ENCODE measurements at regions of chr16 and their contacts with region 1.

Region 1: GRCh38 chr16:50024684-50025536 is at the start of gene CNEP1R1:
- DNase-seq: peak; percentile 87
- ATAC-seq: peak; percentile 95
- H3K4me3 Mint-ChIP-seq: peak within 1 kb of the TSS; percentile 96
- H3K27ac Mint-ChIP-seq: peak within 1 kb of the TSS; percentile 83
- H3K4me1 Mint-ChIP-seq: peaks cover 19% of the 10 kb centered on the region
- H3K27me3 Mint-ChIP-seq: peaks cover 6% of the 10 kb centered on the region
- CTCF ChIP-seq: peak; percentile 82
- total RNA-seq, gene CNEP1R1: 22.1 and 31.0 TPM in 2 replicates

Region 2: DNA sequence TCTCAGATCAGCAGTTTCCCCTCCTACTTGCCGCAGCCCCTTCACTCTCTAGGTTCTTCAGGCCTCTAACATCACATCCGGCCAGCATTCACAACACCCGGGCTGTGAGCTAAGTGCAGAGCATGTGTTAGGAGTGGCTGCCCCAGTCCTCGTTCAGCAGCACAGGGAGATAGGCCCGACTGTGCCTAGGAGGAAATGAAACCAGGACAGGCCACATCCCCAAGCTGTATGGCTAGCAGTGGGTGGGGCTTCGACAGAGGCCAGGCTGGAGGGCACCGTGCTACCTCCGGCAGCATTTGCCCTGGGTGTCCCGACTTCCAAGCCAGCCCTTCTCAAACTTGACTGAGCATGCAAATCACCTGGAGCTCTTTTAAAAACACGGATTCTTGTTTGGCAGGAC is 449.5 kb before region 1 on chr16:
- CTCF ChIA-PET with region 1: no interaction called
- POLR2A ChIA-PET with region 1: no interaction called
- intact Hi-C with region 1: no loop called
- DNase-seq: peak; percentile 19
- ATAC-seq: peak; percentile 99
- H3K4me3 Mint-ChIP-seq: peak overlapping the region; percentile 26
- H3K27ac Mint-ChIP-seq: peak overlapping the region; percentile 72
- H3K4me1 Mint-ChIP-seq: peaks cover 17% of the 10 kb centered on the region
- H3K27me3 Mint-ChIP-seq: no peaks in the 10 kb centered on the region
- CTCF ChIP-seq: no peak

Region 3: GRCh38 chr16:49855280-49855821 is 169.6 kb before region 1 on chr16:
- CTCF ChIA-PET with region 1: no interaction called
- POLR2A ChIA-PET with region 1: no interaction called
- intact Hi-C with region 1: loop called (anchors 5 kb)
- DNase-seq: peak; percentile 47
- ATAC-seq: peak; percentile 77
- H3K4me3 Mint-ChIP-seq: peak overlapping the region; percentile 69
- H3K27ac Mint-ChIP-seq: no peak overlapping the region
- H3K4me1 Mint-ChIP-seq: peaks cover 21% of the 10 kb centered on the region
- H3K27me3 Mint-ChIP-seq: peaks cover 38% of the 10 kb centered on the region
- CTCF ChIP-seq: no peak

Region 4: DNA sequence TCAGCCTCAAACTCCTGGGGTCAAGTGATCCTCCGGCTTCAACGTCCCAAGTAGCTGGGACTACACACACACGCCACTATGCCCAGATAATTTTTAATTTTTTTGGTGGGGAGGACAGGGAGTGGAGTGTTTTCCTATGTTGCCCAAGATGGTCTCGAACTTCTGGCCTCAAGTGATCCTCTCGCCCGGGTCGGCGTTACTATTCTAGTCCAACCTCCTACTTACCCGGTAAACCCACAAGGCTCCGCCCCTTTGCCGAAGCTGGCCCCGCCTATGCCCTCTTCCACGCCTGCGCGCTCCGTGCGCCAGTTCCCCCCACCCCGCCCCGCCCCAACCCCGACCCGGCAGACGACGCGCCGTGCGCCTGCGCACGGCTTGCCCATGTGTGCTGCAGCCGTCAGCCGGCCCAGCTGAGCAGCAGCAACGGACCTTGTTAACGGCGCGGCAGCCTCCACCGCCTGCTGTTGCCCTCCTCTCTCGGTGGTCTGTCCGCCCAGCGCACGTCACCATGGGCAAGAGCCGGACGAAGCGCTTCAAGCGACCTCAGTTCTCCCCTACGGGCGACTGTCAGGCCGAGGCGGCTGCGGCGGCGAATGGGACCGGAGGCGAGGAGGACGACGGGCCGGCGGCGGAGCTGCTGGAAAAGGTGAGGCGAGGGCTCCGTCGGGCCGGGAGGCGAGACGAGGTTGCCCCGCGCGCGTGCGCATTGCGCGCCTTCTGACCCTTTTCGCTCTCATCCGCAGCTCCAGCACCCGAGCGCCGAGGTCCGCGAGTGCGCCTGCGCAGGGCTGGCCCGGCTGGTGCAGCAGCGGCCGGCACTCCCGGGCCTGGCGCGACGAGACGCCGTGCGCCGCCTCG is 40.9 kb after region 1 on chr16 and contains the start of gene HEATR3:
- CTCF ChIA-PET with region 1: interaction called, 17 read pairs
- POLR2A ChIA-PET with region 1: interaction called, 15 read pairs
- intact Hi-C with region 1: loop called (anchors 1 kb)
- DNase-seq: peak; percentile 92
- ATAC-seq: peak; percentile 85
- H3K4me3 Mint-ChIP-seq: peak within 1 kb of the TSS; percentile 90
- H3K27ac Mint-ChIP-seq: peak within 1 kb of the TSS; percentile 90
- H3K4me1 Mint-ChIP-seq: peaks cover 31% of the 10 kb centered on the region
- H3K27me3 Mint-ChIP-seq: no peaks in the 10 kb centered on the region
- CTCF ChIP-seq: no peak
- total RNA-seq, gene HEATR3: 16.1 and 17.8 TPM in 2 replicates

Region 5: DNA sequence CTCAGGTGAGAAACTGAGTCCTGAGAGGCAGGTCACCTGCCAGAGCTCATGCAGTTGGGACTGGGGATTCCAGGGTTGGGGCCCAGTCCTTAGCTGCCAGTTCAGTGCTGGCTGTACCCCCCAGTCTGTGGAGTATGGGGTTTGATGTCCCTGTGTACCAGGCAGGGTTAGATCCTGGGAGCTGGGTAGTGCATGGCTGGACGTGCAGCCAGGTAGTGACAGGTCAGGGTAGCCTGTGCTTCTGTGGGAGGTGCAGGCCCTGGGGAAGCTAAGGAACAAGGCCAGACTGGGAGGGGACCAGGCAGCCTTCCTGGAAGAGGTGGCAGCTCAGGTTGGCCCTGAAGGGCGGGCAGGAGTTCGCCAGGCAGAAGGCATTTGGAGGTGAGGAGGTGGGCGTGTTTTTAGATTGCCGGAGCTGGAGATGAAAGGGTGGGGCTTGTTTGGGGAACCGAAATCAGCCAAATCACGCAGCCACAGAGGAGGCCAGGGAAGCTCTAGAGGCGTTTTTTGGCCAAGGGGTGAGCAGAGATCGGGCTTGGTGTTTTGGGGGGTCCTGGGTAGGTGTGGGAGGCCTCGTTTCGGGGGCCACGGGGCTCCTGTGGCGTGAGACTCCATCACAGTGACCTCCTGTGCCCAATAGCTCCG is 248.9 kb after region 1 on chr16:
- CTCF ChIA-PET with region 1: no interaction called
- POLR2A ChIA-PET with region 1: interaction called, 10 read pairs
- intact Hi-C with region 1: no loop called
- DNase-seq: no peak
- ATAC-seq: peak; percentile 82
- H3K4me3 Mint-ChIP-seq: peak overlapping the region; percentile 99
- H3K27ac Mint-ChIP-seq: peak overlapping the region; percentile 100
- H3K4me1 Mint-ChIP-seq: peaks cover 92% of the 10 kb centered on the region
- H3K27me3 Mint-ChIP-seq: no peaks in the 10 kb centered on the region
- CTCF ChIP-seq: no peak

Region 6: GRCh38 chr16:50665128-50665878 is 640.4 kb after region 1 on chr16:
- CTCF ChIA-PET with region 1: interaction called, 16 read pairs
- POLR2A ChIA-PET with region 1: interaction called, 3 read pairs
- intact Hi-C with region 1: loop called (anchors 2 kb)
- DNase-seq: peak; percentile 68
- ATAC-seq: peak; percentile 70
- H3K4me3 Mint-ChIP-seq: peak overlapping the region; percentile 81
- H3K27ac Mint-ChIP-seq: peak overlapping the region; percentile 65
- H3K4me1 Mint-ChIP-seq: peaks cover 23% of the 10 kb centered on the region
- H3K27me3 Mint-ChIP-seq: no peaks in the 10 kb centered on the region
- CTCF ChIP-seq: no peak

Region 7: DNA sequence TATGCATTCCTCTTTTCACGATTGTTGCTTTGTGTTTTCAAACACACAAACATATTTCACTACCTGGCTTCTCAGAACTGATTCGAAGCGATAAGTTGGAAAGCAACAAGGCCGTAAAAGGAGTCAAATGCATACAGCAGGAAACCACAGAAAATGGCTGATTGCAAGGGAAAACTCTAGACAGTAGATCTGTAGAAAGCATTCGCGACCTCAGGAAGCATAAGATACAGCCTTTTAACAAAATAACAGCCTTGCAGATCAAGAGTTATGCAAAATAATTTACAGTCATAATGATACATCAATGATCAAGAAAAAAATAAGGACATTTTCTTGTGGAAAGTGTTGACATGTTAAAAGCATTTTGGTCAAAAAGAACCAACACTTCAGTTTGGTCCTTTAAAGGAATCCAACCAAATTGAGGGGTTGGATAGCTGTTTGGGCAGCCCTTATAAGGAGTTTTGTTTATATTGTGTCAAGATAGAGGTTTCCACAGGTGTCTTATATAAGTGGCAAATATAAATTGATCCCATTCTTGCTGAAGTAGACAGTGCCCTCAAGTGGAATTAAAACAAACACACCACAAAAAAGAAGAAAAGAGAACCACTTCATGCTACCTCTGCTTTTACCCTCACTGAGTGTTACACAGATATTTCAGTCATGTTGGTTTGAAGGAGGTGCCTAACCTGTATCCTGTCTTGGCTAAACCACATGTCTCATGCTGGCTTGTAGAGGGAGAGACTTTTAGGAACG is 722.5 kb after region 1 on chr16:
- CTCF ChIA-PET with region 1: interaction called, 3 read pairs
- POLR2A ChIA-PET with region 1: interaction called, 6 read pairs
- intact Hi-C with region 1: loop called (anchors 1 kb)
- DNase-seq: no peak
- ATAC-seq: peak; percentile 61
- H3K4me3 Mint-ChIP-seq: peak overlapping the region; percentile 45
- H3K27ac Mint-ChIP-seq: peak overlapping the region; percentile 11
- H3K4me1 Mint-ChIP-seq: peaks cover 53% of the 10 kb centered on the region
- H3K27me3 Mint-ChIP-seq: no peaks in the 10 kb centered on the region
- CTCF ChIP-seq: no peak

Measured in activated B cell treated with CpG ODN at 0.5 μM for 24 hours (primary cell).